IMR-90 (cell line): ENCODE measurements at regions of chr2 and their contacts with region 1.

Region 1: GRCh38 chr2:219206442-219207253 is at the start of gene ZFAND2B:
- DNase-seq: peak; percentile 88
- ATAC-seq: peak; percentile 96
- H3K4me3 ChIP-seq: peak within 1 kb of the TSS; percentile 84
- H3K27ac ChIP-seq: peak within 1 kb of the TSS; percentile 96
- H3K4me1 ChIP-seq: peaks cover 16% of the 10 kb centered on the region
- H3K27me3 ChIP-seq: no peaks in the 10 kb centered on the region
- CTCF ChIP-seq: no peak
- POLR2A ChIP-seq: peak; percentile 88
- RAD21 ChIP-seq: no peak; the same call in 1 of the 2 replicates
- total RNA-seq, gene ZFAND2B: 21.9 and 25.5 TPM in 2 replicates

Region 2: GRCh38 chr2:219160186-219161017 is 46.2 kb before region 1 on chr2 and contains the start of gene NHEJ1:
- CTCF ChIA-PET with region 1: no interaction called
- POLR2A ChIA-PET with region 1: no interaction called
- dilution Hi-C with region 1: no loop called
- in situ Hi-C with region 1: no loop called
- intact Hi-C with region 1: loop called (anchors 1 kb)
- DNase-seq: peak; percentile 89
- ATAC-seq: peak; percentile 94
- H3K4me3 ChIP-seq: peak within 1 kb of the TSS; percentile 82
- H3K27ac ChIP-seq: peak within 1 kb of the TSS; percentile 99
- H3K4me1 ChIP-seq: peaks cover 2% of the 10 kb centered on the region; the same call in 1 of the 2 replicates
- H3K27me3 ChIP-seq: no peaks in the 10 kb centered on the region
- CTCF ChIP-seq: peak; percentile 95
- POLR2A ChIP-seq: peak; percentile 44
- RAD21 ChIP-seq: peak; percentile 84
- total RNA-seq, gene NHEJ1: 15.3 and 23.1 TPM in 2 replicates

Region 3: DNA sequence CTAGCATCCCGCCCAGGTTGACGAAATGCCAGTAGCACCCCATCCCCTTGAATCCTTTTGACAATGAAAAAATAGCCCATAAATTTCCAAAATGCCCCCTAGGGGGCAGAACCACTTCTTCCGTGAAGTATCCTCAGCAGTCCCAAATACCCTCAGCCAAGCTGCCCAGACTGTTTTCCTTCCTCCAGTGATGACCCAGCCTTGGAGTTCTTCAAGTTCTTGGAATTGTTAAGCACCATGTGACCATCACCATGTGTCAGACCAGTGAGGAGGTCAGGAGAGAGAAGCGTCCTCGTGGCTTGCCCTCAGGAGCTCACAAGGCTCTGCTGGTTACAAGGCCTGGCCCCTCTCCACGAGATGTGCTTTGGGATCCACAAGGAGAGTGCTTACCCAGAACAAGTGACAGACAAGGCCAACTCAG is 35.4 kb before region 1 on chr2:
- CTCF ChIA-PET with region 1: no interaction called
- POLR2A ChIA-PET with region 1: interaction called, 4 read pairs
- dilution Hi-C with region 1: no loop called
- in situ Hi-C with region 1: loop called (anchors 5 kb)
- intact Hi-C with region 1: loop called (anchors 2 kb)
- DNase-seq: peak; percentile 86
- ATAC-seq: peak; percentile 87
- H3K4me3 ChIP-seq: no peak overlapping the region
- H3K27ac ChIP-seq: peak overlapping the region; percentile 78
- H3K4me1 ChIP-seq: peaks cover 5% of the 10 kb centered on the region; the same call in 1 of the 2 replicates
- H3K27me3 ChIP-seq: no peaks in the 10 kb centered on the region
- CTCF ChIP-seq: peak; percentile 72
- POLR2A ChIP-seq: no peak
- RAD21 ChIP-seq: peak; percentile 56

Region 4: DNA sequence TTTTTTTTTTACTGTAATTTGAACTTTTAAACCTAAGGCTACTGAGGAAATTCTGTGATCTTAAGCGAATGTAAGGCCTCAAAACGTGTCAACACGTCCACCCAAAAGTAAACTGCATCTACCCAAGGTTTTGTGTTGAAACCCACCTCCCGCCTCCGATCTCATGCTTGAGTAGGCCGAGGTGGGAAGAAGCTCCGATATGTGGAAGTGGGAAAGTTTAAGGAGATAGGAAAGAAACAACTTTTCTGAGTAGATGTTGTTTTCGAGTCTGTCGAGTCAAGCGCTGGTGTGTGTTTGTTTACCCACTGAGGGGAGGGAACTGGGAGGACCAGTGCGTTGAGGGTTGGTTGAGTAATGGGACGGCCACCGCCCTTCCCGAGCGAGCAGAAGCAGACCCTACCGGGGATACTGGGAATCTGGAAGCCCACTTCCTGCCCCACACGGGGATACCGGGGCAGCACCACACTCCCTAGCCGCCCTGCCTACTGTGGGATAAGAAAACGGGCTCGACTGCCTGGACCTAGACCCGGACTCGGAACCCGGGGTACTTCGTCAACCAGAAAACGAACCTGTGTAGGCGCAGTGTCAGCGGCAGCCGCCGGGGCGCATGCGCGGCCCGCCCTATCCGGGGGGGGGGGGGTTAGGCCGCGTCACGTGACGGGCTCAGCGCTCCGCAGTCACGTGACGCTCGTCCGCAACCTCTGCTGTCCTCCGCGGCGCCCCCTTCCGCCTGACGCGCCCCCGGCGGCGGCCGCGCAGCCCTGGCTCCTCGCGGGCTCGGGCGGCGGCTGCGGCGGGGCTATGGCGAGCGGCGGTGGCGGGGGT is 28.9 kb before region 1 on chr2 and contains the start of gene RETREG2:
- CTCF ChIA-PET with region 1: no interaction called
- POLR2A ChIA-PET with region 1: interaction called, 5 read pairs
- dilution Hi-C with region 1: no loop called
- in situ Hi-C with region 1: loop called (anchors 5 kb)
- intact Hi-C with region 1: loop called (anchors 2 kb)
- DNase-seq: peak; percentile 89
- ATAC-seq: peak; percentile 73
- H3K4me3 ChIP-seq: peak within 1 kb of the TSS; percentile 64
- H3K27ac ChIP-seq: peak within 1 kb of the TSS; percentile 96
- H3K4me1 ChIP-seq: 0 out of 2 replicates have a peak, but pooled peaks cover 6% of the 10 kb centered on the region
- H3K27me3 ChIP-seq: no peaks in the 10 kb centered on the region
- CTCF ChIP-seq: peak; percentile 56
- POLR2A ChIP-seq: peak; percentile 89
- RAD21 ChIP-seq: 0 out of 2 replicates have a peak, but pooled peaks have one; percentile 4
- total RNA-seq, gene RETREG2: 39.2 and 51.1 TPM in 2 replicates